Heart left ventricle (tissue), 16 donors: ENCODE measurements at regions of chr3 and their contacts with region 1.

Region 1: GRCh38 chr3:157081681-157082210 is 78.2 kb downstream of the CCNL1 start:
- DNase-seq: peak; percentile 86 to 94 (median 91)
- ATAC-seq: peak; percentile 71 to 91 (median 86)
- H3K4me3 ChIP-seq: no peak overlapping the region
- H3K27ac ChIP-seq: peak overlapping the region in 5 of 12 donors; percentile 4 to 52 (median 33)
- H3K4me1 ChIP-seq: peaks cover 0 to 41% (median 15%) of the 10 kb centered on the region in 12 donors
- H3K27me3 ChIP-seq: no peaks in the 10 kb centered on the region
- CTCF ChIP-seq: peak; percentile 93 to 98 (median 96)
- POLR2A ChIP-seq: no peak

Region 2: GRCh38 chr3:156535162-156535627 is 546.6 kb before region 1 on chr3:
- intact Hi-C with region 1: loop called in 6 of 10 experiments (anchors 5 kb)
- DNase-seq: peak in 4 of 5 donors; percentile 58 to 89 (median 74)
- ATAC-seq: peak; percentile 81 to 96 (median 94)
- H3K4me3 ChIP-seq: no peak overlapping the region
- H3K27ac ChIP-seq: peak overlapping the region; percentile 16 to 84 (median 68)
- H3K4me1 ChIP-seq: peaks cover 0 to 31% (median 15%) of the 10 kb centered on the region in 12 donors
- H3K27me3 ChIP-seq: no peaks in the 10 kb centered on the region
- CTCF ChIP-seq: peak in 7 of 12 donors; percentile 12 to 46 (median 37)
- POLR2A ChIP-seq: no peak

Region 3: DNA sequence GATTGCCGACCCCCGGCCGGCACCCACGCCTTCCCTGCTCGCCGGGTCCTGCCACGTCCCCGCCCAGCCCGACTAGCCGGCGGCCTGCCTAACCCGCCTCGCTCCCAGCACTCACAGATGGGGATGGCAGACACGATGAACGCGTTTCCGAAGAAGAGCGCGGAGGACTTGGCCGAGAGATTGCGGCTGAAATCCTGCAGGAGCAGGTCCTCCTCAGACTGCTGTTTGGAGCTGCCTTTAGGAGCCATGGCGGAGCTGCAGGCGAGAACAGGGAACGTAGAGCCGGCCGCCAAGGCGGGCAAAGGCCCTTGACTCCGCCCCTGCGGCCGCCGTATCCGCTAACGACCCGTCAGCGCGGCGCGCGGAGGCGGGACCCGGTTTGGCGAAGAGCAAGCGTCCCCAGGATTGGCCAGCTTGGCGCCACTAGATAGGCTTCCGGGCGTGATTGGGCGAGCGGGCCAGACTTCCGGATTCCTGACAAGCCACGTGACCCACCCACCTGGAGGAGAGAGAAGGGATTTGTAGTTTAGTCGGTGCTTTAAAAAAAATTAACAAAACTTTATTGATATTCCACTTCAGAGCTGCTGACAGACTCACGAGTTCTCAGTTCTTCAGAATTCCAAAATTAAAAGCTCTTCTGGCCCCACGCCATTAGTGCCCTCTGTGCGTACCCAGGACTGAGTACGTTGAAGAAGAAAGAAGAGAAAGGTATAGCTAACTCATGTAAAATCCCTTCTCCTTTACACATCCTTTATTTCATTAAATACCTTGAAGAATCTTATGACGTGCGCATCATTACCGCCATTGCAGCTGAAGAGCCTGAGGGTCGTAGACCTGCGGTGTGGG is 526.7 kb before region 1 on chr3 and contains the start of gene SSR3:
- intact Hi-C with region 1: loop called in 5 of 10 experiments (anchors 5 kb)
- DNase-seq: peak; percentile 100
- ATAC-seq: peak; percentile 99 to 100 (median 99)
- H3K4me3 ChIP-seq: peak within 1 kb of the TSS; percentile 81 to 98 (median 90)
- H3K27ac ChIP-seq: peak within 1 kb of the TSS; percentile 84 to 98 (median 93)
- H3K4me1 ChIP-seq: peaks cover 8 to 62% (median 41%) of the 10 kb centered on the region in 12 donors
- H3K27me3 ChIP-seq: no peaks in the 10 kb centered on the region
- CTCF ChIP-seq: peak in 9 of 12 donors; percentile 11 to 41 (median 19)
- POLR2A ChIP-seq: peak; percentile 56 to 90
- total RNA-seq, gene SSR3: 171 to 456 (median 197) TPM

Region 4: GRCh38 chr3:156760333-156760732 is 321.4 kb before region 1 on chr3:
- intact Hi-C with region 1: loop called in 1 of 10 experiments (anchors 5 kb)
- DNase-seq: no peak
- ATAC-seq: no peak
- H3K4me3 ChIP-seq: no peak overlapping the region
- H3K27ac ChIP-seq: no peak overlapping the region
- H3K4me1 ChIP-seq: peaks cover 0 to 18% (median 2%) of the 10 kb centered on the region in 12 donors
- H3K27me3 ChIP-seq: no peaks in the 10 kb centered on the region
- CTCF ChIP-seq: no peak
- POLR2A ChIP-seq: no peak

Region 5: DNA sequence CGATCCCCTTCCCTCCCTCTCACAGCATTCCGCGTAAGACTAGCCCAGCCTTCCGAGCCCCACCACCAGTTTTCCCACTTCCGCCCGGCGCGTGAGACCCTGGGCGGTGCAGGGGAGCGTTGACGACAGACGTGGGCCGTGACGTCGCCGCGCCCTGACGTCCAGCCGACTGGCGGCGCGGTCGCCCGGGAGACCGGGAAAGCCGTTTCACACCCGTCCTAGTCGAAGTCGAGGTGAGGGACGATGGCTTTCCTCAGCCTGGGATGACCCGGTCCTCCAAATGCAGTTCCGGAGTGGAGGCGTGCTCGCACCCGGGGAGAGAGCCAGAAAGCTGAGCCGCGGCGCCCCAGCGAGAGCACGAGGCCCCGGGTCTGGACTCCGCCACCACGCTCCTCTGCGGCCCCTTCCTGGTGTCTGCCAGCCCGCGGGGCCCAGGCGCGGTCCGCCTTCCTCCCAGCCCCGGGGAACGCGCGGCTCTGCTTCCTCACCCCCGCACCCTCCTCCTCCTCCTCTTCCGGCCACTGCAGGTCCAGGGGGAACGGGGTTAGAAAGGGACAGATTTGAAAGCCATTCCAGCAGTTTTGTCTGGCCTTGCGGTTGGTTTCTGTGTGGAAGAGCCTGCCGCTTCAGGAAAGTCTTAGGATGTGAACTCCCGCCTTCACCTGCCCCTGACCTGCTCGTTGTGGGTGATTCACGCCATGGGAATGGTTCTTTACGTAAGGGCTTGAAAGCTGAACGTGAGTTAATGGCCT is 255.4 kb before region 1 on chr3 and contains the start of gene LEKR1:
- intact Hi-C with region 1: loop called in 7 of 10 experiments (anchors 1 to 10 kb)
- DNase-seq: peak; percentile 89 to 93 (median 91)
- ATAC-seq: peak; percentile 85 to 98 (median 96)
- H3K4me3 ChIP-seq: peak within 1 kb of the TSS; percentile 56 to 94 (median 67)
- H3K27ac ChIP-seq: peak within 1 kb of the TSS; percentile 83 to 96 (median 89)
- H3K4me1 ChIP-seq: peaks cover 0 to 17% (median 6%) of the 10 kb centered on the region in 12 donors
- H3K27me3 ChIP-seq: no peaks in the 10 kb centered on the region
- CTCF ChIP-seq: peak in 1 of 12 donors; percentile 4
- POLR2A ChIP-seq: peak; percentile 14 to 72
- total RNA-seq, gene LEKR1: 0.23 to 1.8 (median 1.0) TPM in 8 of 9 donors, not detected in the other

Region 6: DNA sequence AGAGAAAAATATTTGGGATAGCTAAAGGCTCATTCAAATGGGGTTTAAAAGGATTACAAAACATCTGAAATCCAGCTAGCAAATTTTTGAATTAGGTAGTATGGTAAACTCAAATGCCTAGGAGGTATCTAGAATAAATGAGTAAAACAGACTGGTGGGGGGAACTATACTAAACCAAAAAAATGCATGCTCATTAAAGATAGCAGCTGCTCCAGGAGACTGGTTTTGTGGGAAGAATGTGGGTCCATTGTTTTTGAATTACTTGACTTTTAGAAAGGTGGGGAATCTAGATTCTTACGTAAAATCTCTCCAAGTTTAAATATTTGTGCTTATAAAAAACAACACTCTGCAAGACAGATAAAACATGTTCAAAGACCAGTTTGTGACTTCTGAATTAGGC is 181.8 kb before region 1 on chr3:
- intact Hi-C with region 1: no loop called
- DNase-seq: no peak
- ATAC-seq: no peak
- H3K4me3 ChIP-seq: no peak overlapping the region
- H3K27ac ChIP-seq: no peak overlapping the region
- H3K4me1 ChIP-seq: no peaks in the 10 kb centered on the region
- H3K27me3 ChIP-seq: no peaks in the 10 kb centered on the region
- CTCF ChIP-seq: no peak
- POLR2A ChIP-seq: no peak

Region 7: DNA sequence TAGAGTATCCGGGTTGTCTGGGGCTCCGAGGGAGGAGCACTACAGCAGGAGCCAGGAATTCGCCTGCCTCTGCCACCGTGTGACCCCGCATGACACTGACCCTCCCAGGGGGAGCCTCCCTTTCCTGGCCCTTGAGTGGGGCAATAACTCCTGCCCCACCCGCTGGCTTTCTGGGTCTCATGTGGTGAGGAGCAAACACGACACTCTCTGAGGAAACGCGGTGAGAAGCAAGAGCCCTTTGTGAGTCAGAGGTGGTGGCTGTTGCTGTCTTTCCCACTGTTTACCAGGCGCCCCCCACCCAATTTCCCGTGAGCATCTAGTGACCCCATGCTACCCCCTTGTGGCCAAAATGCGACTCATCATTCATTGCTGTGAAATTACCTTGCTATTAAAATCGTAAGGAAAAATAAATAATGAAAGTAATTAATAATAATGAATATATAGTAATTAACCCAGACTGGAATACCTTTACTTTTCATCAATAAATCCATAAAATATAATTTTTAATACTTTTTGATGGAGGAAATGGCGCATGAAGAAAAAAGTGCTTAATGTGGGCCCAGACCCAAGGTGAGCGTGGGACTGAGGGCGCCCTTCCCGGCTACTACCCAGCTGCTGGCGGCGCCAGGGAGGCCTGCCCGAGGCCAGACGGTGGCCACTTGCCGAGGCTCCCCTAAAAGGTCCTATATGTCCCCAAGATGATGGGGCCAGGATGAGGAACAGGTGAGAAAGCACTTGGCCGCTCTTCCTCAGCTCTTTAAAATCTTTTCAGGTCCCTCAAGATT is 48.9 kb after region 1 on chr3:
- intact Hi-C with region 1: loop called in 4 of 10 experiments (anchors 2 to 5 kb)
- DNase-seq: peak in 4 of 5 donors; percentile 46 to 66 (median 55)
- ATAC-seq: peak; percentile 3 to 65 (median 18)
- H3K4me3 ChIP-seq: peak overlapping the region in 10 of 12 donors; percentile 12 to 43 (median 32)
- H3K27ac ChIP-seq: peak overlapping the region; percentile 68 to 88 (median 80)
- H3K4me1 ChIP-seq: peaks cover 5 to 77% (median 52%) of the 10 kb centered on the region in 12 donors
- H3K27me3 ChIP-seq: no peaks in the 10 kb centered on the region
- CTCF ChIP-seq: peak; percentile 47 to 77 (median 70)
- POLR2A ChIP-seq: no peak